Activated CD8-positive, alpha-beta T cell treated with anti-CD3 and anti-CD28 coated beads for 36 hours (primary cell): ENCODE measurements at regions of chr19 and their contacts with region 1.

Region 1: DNA sequence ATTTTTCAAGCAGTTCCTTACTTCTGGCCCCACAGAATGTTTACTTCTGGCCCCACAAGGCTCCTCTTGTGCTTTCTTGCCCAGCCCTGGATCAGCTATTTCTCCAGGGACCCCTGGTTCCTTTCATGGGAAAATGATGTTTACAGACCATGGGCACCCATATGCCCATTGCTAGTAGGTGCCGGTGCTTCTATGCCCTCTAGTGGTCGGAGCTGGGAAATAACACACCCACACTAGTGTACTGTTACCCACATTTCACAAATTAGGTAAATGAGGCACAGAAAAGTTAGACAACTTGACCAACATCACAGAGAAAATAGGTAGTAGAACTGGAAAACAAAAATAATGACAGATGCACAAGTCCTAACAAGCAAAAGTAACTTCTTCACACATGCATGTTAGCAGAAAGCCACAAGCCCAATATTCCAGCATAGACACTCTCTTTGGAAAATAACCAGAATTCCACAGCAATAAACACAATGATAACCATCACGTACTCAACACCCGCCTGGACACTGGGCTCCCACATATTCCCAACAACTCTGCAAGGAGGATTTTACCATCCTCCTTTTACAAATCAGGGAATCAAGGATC is 1.3 kb upstream of the CEACAM6 start:
- DNase-seq: peak; percentile 86
- ATAC-seq: peak; percentile 96
- H3K4me3 Mint-ChIP-seq: no peak overlapping the region
- H3K27ac Mint-ChIP-seq: no peak overlapping the region
- H3K4me1 Mint-ChIP-seq: peaks cover 3% of the 10 kb centered on the region
- H3K27me3 Mint-ChIP-seq: peaks cover 24% of the 10 kb centered on the region
- CTCF ChIP-seq: peak; percentile 72

Region 2: GRCh38 chr19:41641879-41642485 is 112.1 kb before region 1 on chr19:
- CTCF ChIA-PET with region 1: interaction called, 27 read pairs
- POLR2A ChIA-PET with region 1: no interaction called
- intact Hi-C with region 1: loop called (anchors 10 kb)
- DNase-seq: peak; percentile 80
- ATAC-seq: peak; percentile 88
- H3K4me3 Mint-ChIP-seq: no peak overlapping the region
- H3K27ac Mint-ChIP-seq: no peak overlapping the region
- H3K4me1 Mint-ChIP-seq: no peaks in the 10 kb centered on the region
- H3K27me3 Mint-ChIP-seq: peaks cover 10% of the 10 kb centered on the region
- CTCF ChIP-seq: peak; percentile 94

Region 3: GRCh38 chr19:41706741-41707501 is 47.1 kb before region 1 on chr19:
- CTCF ChIA-PET with region 1: interaction called, 45 read pairs
- POLR2A ChIA-PET with region 1: no interaction called
- intact Hi-C with region 1: no loop called
- DNase-seq: peak; percentile 80
- ATAC-seq: peak; percentile 97
- H3K4me3 Mint-ChIP-seq: peak overlapping the region; percentile 39
- H3K27ac Mint-ChIP-seq: no peak overlapping the region
- H3K4me1 Mint-ChIP-seq: no peaks in the 10 kb centered on the region
- H3K27me3 Mint-ChIP-seq: peaks cover 38% of the 10 kb centered on the region
- CTCF ChIP-seq: peak; percentile 100

Region 4: GRCh38 chr19:41740415-41741243 is 13.4 kb before region 1 on chr19:
- CTCF ChIA-PET with region 1: interaction called, 46 read pairs
- POLR2A ChIA-PET with region 1: no interaction called
- intact Hi-C with region 1: no loop called
- DNase-seq: peak; percentile 50
- ATAC-seq: peak; percentile 83
- H3K4me3 Mint-ChIP-seq: no peak overlapping the region
- H3K27ac Mint-ChIP-seq: peak overlapping the region; percentile 65
- H3K4me1 Mint-ChIP-seq: peaks cover 24% of the 10 kb centered on the region
- H3K27me3 Mint-ChIP-seq: peaks cover 38% of the 10 kb centered on the region
- CTCF ChIP-seq: no peak

Region 5: GRCh38 chr19:41785653-41786052 is 31.6 kb after region 1 on chr19:
- CTCF ChIA-PET with region 1: interaction called, 177 read pairs
- POLR2A ChIA-PET with region 1: interaction called, 3 read pairs
- intact Hi-C with region 1: loop called (anchors 2 kb)
- DNase-seq: peak; percentile 88
- ATAC-seq: peak; percentile 98
- H3K4me3 Mint-ChIP-seq: no peak overlapping the region
- H3K27ac Mint-ChIP-seq: no peak overlapping the region
- H3K4me1 Mint-ChIP-seq: peaks cover 14% of the 10 kb centered on the region
- H3K27me3 Mint-ChIP-seq: peaks cover 50% of the 10 kb centered on the region
- CTCF ChIP-seq: peak; percentile 94

Region 6: DNA sequence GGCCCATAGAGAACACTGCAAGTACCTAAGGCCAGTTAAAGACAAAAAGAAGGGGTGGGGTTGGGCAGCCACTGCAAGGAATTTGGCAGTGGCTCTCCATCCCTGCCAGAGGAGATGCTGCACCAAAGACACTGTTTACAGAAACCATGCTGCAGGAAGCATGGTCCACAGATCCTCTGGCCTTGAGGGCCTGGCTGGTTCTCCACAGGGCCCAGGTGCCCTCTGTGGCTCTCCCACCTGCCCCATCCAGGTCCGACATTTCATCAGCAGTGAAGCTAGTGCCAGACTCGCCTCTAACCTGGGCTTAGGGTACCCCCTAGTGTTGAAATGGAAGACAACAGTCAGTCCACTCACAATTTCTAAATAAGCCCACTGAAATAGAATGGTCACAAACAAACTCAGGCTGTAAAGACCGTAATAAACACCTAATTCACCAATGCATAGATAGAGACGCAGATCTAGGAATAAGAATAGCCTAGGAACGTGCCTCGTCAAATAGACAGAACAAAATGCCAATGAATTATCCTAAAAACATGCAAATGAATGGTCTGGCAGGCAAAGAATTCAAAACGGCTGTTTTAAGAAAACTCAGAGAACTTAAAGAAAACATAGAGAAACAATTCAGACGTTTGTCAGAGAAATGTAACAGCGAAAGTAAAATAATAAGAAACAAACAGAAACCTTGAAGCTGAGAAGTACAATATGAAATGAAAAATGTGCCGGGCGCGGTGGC is 67.1 kb after region 1 on chr19:
- CTCF ChIA-PET with region 1: interaction called, 21 read pairs
- POLR2A ChIA-PET with region 1: no interaction called
- intact Hi-C with region 1: no loop called
- DNase-seq: peak; percentile 63
- ATAC-seq: peak; percentile 93
- H3K4me3 Mint-ChIP-seq: no peak overlapping the region
- H3K27ac Mint-ChIP-seq: no peak overlapping the region
- H3K4me1 Mint-ChIP-seq: no peaks in the 10 kb centered on the region
- H3K27me3 Mint-ChIP-seq: peaks cover 12% of the 10 kb centered on the region
- CTCF ChIP-seq: peak; percentile 93

Region 7: GRCh38 chr19:41872775-41873647 is 119.0 kb after region 1 on chr19:
- CTCF ChIA-PET with region 1: no interaction called
- POLR2A ChIA-PET with region 1: no interaction called
- intact Hi-C with region 1: no loop called
- DNase-seq: peak; percentile 80
- ATAC-seq: no peak
- H3K4me3 Mint-ChIP-seq: no peak overlapping the region
- H3K27ac Mint-ChIP-seq: peak overlapping the region; percentile 95
- H3K4me1 Mint-ChIP-seq: peaks cover 80% of the 10 kb centered on the region
- H3K27me3 Mint-ChIP-seq: no peaks in the 10 kb centered on the region
- CTCF ChIP-seq: peak; percentile 84